ENCODE measurements at regions of chr4 and their contacts with region 1.

Region 1: DNA sequence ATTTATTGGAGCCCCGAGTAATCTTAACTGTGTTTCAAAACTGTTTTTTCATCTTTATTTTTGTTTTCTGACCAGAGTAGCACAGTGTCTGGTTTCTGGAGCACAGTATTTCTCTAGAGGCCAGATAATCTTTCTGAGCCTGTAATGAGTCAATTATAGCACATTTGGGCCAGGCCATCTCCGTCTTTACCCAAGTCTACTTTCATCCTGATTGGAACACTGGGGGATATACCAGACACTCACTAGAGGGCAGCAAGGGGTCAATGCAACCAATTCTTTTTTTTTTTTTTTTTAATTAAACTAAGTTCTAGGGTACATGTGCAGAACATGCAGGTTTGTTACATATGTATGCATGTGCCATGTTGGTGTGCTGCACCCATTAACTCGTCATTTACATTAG is 282.0 kb downstream of the ARHGAP24 start:
- DNase-seq: no peak
- H3K4me3 ChIP-seq: no peak overlapping the region
- H3K27ac ChIP-seq: no peak overlapping the region
- H3K4me1 ChIP-seq: no peaks in the 10 kb centered on the region
- H3K27me3 ChIP-seq: no peaks in the 10 kb centered on the region
- CTCF ChIP-seq: peak; percentile 28

Region 2: GRCh38 chr4:85826060-85826678 is 69.2 kb after region 1 on chr4:
- intact Hi-C with region 1: no loop called
- DNase-seq: peak; percentile 41
- H3K4me3 ChIP-seq: no peak overlapping the region
- H3K27ac ChIP-seq: no peak overlapping the region
- H3K4me1 ChIP-seq: no peaks in the 10 kb centered on the region
- H3K27me3 ChIP-seq: no peaks in the 10 kb centered on the region
- CTCF ChIP-seq: no peak

Region 3: DNA sequence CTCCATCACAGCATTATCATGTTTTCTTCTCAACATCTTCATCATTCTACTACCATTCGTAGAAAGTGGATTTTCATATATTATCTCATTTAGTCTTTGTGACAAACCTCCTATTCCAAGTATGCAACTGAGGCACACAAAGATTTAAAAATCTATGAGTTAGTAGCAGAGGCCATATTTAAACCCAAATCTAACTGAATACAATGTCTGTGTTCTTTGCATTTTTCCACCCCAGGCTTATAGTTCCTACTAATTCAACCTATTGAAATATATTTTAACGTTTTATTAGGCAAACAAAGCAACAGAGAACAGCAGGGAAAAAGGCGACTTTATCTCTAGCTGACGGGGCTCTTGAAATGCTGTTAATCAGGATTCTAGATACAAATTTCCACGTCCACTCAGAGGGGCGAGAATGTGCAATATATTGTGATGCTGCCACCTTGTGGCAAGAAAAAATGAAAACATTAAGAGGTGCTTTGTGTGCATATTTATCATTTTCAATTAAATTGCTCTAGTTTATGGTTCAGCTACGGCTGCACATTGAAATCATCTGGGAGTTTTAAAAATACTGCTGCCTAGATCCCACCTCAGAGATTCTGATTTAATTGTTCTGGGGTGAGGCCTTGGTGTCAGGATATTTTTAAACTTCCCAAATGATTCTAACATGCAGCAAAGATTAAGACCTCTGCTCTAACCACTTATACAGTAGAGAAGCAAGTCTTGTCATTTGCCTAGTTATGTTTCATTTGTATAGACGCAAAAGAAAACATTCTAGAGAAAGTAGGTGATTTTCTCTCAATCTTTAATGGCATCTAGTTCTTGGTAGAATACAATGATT is 287.0 kb after region 1 on chr4:
- intact Hi-C with region 1: loop called (anchors 10 kb)
- DNase-seq: peak; percentile 36
- H3K4me3 ChIP-seq: no peak overlapping the region
- H3K27ac ChIP-seq: no peak overlapping the region
- H3K4me1 ChIP-seq: no peaks in the 10 kb centered on the region
- H3K27me3 ChIP-seq: no peaks in the 10 kb centered on the region
- CTCF ChIP-seq: peak; percentile 62